MCF 10A (cell line): ENCODE measurements at regions of chr9 and their contacts with region 1.

Region 1: GRCh38 chr9:72280913-72281500 is 84.0 kb downstream of the ZFAND5 start:
- DNase-seq: peak; percentile 73
- H3K4me3 Mint-ChIP-seq: no peak overlapping the region
- H3K27ac Mint-ChIP-seq: no peak overlapping the region
- H3K4me1 Mint-ChIP-seq: no peaks in the 10 kb centered on the region
- H3K27me3 Mint-ChIP-seq: no peaks in the 10 kb centered on the region
- CTCF ChIP-seq: peak; percentile 93

Region 2: GRCh38 chr9:71549023-71549422 is 732.0 kb before region 1 on chr9:
- CTCF ChIA-PET with region 1: no interaction called
- POLR2A ChIA-PET with region 1: no interaction called
- intact Hi-C with region 1: no loop called
- DNase-seq: no peak
- H3K4me3 Mint-ChIP-seq: no peak overlapping the region
- H3K27ac Mint-ChIP-seq: no peak overlapping the region
- H3K4me1 Mint-ChIP-seq: no peaks in the 10 kb centered on the region
- H3K27me3 Mint-ChIP-seq: peaks cover 12% of the 10 kb centered on the region
- CTCF ChIP-seq: no peak

Region 3: DNA sequence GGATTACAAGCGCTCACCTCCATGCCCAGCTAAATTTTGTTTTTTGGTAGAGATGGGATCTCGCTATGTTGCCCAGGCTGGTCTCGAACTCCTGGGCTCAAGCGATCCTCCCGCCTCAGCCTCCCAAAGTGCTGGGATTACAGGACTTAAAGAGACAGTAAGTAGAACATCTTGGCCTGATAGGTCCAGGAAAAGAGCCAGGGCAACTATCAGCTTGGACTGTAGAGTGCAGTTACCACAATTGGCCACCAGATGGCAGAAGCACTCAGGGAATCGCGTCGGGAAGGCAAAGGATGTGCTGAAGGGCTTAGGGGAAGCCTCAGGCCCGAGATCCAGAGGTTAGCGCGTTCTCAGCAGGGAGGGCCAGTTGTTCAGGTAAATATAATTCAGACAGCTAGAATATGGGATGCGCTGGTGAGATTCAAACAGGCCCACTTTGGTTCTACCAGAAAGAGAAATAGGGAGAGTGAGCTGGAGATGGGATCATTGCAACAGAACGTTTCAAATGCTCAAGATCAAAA is 242.1 kb before region 1 on chr9:
- CTCF ChIA-PET with region 1: interaction called, 242 read pairs
- POLR2A ChIA-PET with region 1: interaction called, 3 read pairs
- intact Hi-C with region 1: no loop called
- DNase-seq: peak; percentile 85
- H3K4me3 Mint-ChIP-seq: no peak overlapping the region
- H3K27ac Mint-ChIP-seq: no peak overlapping the region
- H3K4me1 Mint-ChIP-seq: peaks cover 12% of the 10 kb centered on the region
- H3K27me3 Mint-ChIP-seq: no peaks in the 10 kb centered on the region
- CTCF ChIP-seq: peak; percentile 94

Region 4: DNA sequence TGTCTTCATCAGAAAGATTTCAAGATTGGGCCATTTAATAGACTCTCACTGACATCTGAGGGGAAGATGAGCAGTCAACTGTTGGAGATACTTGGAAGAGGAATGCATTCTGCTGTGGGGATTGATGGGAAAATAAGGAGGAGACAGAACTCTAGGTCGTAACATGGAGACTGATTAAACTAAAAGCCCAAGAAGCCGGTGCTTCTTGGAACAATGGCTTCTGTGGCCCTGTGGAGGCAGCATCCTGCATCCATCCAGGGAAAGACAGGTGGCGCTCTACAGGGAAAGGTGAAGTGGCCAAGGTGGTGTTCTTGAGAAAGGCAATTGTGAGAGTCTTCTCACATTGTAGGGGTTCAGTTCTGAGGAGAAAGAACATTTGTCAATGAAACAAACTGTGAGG is 52.7 kb after region 1 on chr9:
- CTCF ChIA-PET with region 1: no interaction called
- POLR2A ChIA-PET with region 1: no interaction called
- intact Hi-C with region 1: no loop called
- DNase-seq: no peak
- H3K4me3 Mint-ChIP-seq: no peak overlapping the region
- H3K27ac Mint-ChIP-seq: no peak overlapping the region
- H3K4me1 Mint-ChIP-seq: no peaks in the 10 kb centered on the region
- H3K27me3 Mint-ChIP-seq: no peaks in the 10 kb centered on the region
- CTCF ChIP-seq: no peak

Region 5: DNA sequence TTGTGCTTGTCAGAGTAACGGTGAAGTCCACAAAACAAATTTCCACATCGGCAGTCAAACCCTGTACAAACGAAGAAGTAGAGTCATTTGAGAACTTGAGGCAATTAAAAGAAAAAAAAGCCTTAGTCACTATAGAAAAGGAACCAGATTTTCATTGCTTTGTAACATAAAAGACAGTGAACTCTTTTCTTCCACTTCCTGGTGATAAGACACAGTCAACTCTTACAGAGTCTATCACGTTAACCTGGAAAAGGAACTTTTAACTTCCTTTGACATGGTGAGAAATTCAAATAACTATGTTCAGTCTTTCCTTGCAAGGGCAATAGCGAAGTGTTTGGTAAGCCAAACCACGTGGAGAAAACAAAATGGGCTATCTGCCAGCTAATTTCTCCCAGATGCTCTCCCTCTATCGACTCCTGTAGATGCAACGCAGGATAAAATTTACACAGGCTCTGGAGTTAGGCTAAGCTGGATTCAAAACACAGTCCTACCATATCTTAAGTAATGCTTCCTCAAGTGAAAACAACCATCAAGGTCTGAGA is 75.1 kb after region 1 on chr9:
- CTCF ChIA-PET with region 1: interaction called, 19 read pairs
- POLR2A ChIA-PET with region 1: no interaction called
- intact Hi-C with region 1: no loop called
- DNase-seq: no peak
- H3K4me3 Mint-ChIP-seq: no peak overlapping the region
- H3K27ac Mint-ChIP-seq: no peak overlapping the region
- H3K4me1 Mint-ChIP-seq: peaks cover 14% of the 10 kb centered on the region
- H3K27me3 Mint-ChIP-seq: no peaks in the 10 kb centered on the region
- CTCF ChIP-seq: no peak

Region 6: DNA sequence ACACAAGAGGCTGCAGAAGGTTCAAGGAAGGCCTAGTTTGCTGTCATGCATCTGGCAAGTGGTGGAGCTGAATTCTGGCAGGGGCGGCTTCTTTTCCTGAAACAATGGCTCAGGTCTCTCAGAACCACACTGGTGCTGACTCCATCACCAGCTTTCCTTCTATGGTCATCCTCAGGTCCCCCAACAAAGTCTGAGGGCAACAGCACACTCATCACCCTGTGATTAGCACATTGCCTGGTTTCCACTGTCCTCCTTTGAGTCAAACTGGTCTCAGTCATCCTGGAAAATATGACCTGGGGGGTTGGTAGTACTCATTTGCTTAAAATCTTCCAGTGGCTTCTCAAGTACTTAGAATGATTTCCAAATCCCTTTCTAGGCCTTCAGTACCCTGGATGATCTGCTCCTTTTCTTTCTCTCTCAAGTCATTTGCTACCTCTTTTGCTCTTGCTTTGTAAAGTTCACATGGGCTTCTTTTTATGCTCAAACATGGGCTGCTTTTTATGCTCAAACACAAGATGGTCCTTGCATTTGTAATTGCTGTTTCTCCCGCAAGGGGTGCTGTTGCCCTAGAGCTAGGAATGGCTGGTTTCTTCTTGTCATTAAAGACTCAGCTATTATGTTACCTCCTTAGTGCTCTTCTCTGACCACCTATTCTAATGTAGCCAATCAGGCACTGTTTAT is 526.9 kb after region 1 on chr9:
- CTCF ChIA-PET with region 1: interaction called, 13 read pairs
- POLR2A ChIA-PET with region 1: no interaction called
- intact Hi-C with region 1: no loop called
- DNase-seq: peak; percentile 42
- H3K4me3 Mint-ChIP-seq: no peak overlapping the region
- H3K27ac Mint-ChIP-seq: no peak overlapping the region
- H3K4me1 Mint-ChIP-seq: no peaks in the 10 kb centered on the region
- H3K27me3 Mint-ChIP-seq: peaks cover 16% of the 10 kb centered on the region
- CTCF ChIP-seq: no peak

Region 7: GRCh38 chr9:72856972-72857623 is 576.1 kb after region 1 on chr9:
- CTCF ChIA-PET with region 1: interaction called, 17 read pairs
- POLR2A ChIA-PET with region 1: no interaction called
- intact Hi-C with region 1: no loop called
- DNase-seq: peak; percentile 64
- H3K4me3 Mint-ChIP-seq: no peak overlapping the region
- H3K27ac Mint-ChIP-seq: no peak overlapping the region
- H3K4me1 Mint-ChIP-seq: no peaks in the 10 kb centered on the region
- H3K27me3 Mint-ChIP-seq: peaks cover 9% of the 10 kb centered on the region
- CTCF ChIP-seq: peak; percentile 41

Region 8: GRCh38 chr9:72912476-72913381 is 631.7 kb after region 1 on chr9:
- CTCF ChIA-PET with region 1: no interaction called
- POLR2A ChIA-PET with region 1: no interaction called
- intact Hi-C with region 1: no loop called
- DNase-seq: no peak
- H3K4me3 Mint-ChIP-seq: no peak overlapping the region
- H3K27ac Mint-ChIP-seq: no peak overlapping the region
- H3K4me1 Mint-ChIP-seq: no peaks in the 10 kb centered on the region
- H3K27me3 Mint-ChIP-seq: peaks cover 38% of the 10 kb centered on the region
- CTCF ChIP-seq: no peak

Region 9: DNA sequence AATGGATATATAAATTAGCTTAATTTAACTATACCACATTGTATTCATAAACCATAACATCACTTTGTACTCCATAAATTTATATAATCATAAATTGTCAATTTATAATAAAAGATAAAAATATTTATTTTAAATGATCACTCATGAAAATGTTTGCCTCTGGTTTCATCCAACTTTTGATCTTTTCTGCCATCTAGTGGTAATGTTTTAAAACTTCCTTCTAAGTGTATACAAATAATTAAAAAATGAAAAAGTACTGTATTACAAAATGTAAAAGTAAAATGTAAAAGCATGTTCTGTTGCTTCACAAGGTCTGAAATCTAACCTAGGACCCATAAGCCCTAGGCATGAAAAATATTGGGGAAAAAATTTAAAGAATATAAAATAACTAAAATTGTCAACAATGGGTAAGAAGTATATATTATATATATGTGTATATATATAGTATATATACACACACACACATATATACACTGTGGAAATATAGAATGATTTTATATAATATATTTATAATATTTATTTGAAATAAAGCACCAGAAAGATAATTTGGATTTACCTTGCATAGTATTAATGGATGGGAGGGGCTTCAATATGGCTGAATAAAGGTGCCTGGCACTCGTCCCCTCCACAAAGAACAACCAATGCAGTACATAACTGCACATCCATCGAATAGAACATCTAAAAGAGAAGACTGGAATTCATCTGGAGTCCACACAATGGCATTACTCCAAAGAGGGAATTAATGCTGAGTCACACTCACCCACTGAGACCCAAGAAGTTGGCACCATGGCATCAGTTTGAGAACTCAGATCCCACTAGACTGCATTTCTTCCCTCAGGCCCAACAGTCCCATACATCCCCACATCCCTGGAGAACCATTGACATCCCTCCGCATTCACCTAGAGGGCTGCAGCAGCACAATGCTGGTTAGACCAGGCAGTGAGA is 903.2 kb after region 1 on chr9:
- CTCF ChIA-PET with region 1: no interaction called
- POLR2A ChIA-PET with region 1: no interaction called
- intact Hi-C with region 1: loop called (anchors 10 kb)
- DNase-seq: peak; percentile 59
- H3K4me3 Mint-ChIP-seq: no peak overlapping the region
- H3K27ac Mint-ChIP-seq: no peak overlapping the region
- H3K4me1 Mint-ChIP-seq: no peaks in the 10 kb centered on the region
- H3K27me3 Mint-ChIP-seq: peaks cover 42% of the 10 kb centered on the region
- CTCF ChIP-seq: peak; percentile 48